ENCODE measurements at regions of chr2 and their contacts with region 1.

Region 1: GRCh38 chr2:98736464-98736889 is 5.5 kb upstream of the MGAT4A start:
- DNase-seq: peak; percentile 59
- ATAC-seq: peak; percentile 87
- H3K4me3 Mint-ChIP-seq: peak overlapping the region; percentile 34
- H3K27ac Mint-ChIP-seq: peak overlapping the region; percentile 55
- H3K4me1 Mint-ChIP-seq: peaks cover 68% of the 10 kb centered on the region
- H3K27me3 Mint-ChIP-seq: no peaks in the 10 kb centered on the region

Region 2: DNA sequence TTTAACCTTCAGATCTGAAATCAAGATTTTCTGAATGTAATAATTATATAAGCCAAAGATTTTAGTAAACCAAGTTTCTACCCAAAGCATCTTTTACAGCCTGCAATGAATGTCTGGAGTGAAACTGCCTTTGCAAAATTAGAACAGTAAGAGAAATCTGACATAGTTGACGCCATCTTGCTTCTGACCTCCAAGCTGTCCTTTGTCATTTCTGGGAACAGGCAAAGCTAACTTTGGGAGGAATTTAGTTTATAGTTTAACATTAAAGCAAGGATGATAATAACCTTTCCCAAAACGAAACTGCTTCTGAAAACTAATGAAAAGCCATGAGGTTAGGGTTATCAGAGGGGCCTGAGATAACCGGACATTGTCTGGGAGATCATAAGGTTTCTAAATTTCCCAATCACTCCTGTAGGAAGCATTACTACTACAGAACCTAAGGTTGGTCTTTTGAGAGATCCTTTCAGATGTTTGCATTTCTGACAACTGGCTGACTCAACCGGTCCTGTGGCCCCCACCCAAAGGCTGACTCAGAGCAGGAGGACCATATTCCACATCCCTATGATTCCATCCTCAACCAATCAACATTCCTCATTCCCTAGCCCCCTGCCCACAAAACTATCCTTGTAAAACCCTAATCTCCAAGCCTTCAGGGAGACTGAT is 865.2 kb before region 1 on chr2:
- CTCF ChIA-PET with region 1: no interaction called
- POLR2A ChIA-PET with region 1: no interaction called
- intact Hi-C with region 1: no loop called
- DNase-seq: no peak
- ATAC-seq: no peak
- H3K4me3 Mint-ChIP-seq: no peak overlapping the region
- H3K27ac Mint-ChIP-seq: peak overlapping the region; percentile 51
- H3K4me1 Mint-ChIP-seq: peaks cover 54% of the 10 kb centered on the region
- H3K27me3 Mint-ChIP-seq: no peaks in the 10 kb centered on the region

Region 3: GRCh38 chr2:98598779-98599428 is 137.6 kb before region 1 on chr2:
- CTCF ChIA-PET with region 1: no interaction called
- POLR2A ChIA-PET with region 1: no interaction called
- intact Hi-C with region 1: no loop called
- DNase-seq: no peak
- ATAC-seq: peak; percentile 30
- H3K4me3 Mint-ChIP-seq: no peak overlapping the region
- H3K27ac Mint-ChIP-seq: peak overlapping the region; percentile 70
- H3K4me1 Mint-ChIP-seq: peaks cover 6% of the 10 kb centered on the region
- H3K27me3 Mint-ChIP-seq: no peaks in the 10 kb centered on the region

Region 4: GRCh38 chr2:98749066-98749450 is 12.6 kb after region 1 on chr2:
- CTCF ChIA-PET with region 1: interaction called, 10 read pairs
- POLR2A ChIA-PET with region 1: no interaction called
- intact Hi-C with region 1: no loop called
- DNase-seq: peak; percentile 32
- ATAC-seq: peak; percentile 60
- H3K4me3 Mint-ChIP-seq: no peak overlapping the region
- H3K27ac Mint-ChIP-seq: peak overlapping the region; percentile 20
- H3K4me1 Mint-ChIP-seq: peaks cover 30% of the 10 kb centered on the region
- H3K27me3 Mint-ChIP-seq: no peaks in the 10 kb centered on the region

Region 5: DNA sequence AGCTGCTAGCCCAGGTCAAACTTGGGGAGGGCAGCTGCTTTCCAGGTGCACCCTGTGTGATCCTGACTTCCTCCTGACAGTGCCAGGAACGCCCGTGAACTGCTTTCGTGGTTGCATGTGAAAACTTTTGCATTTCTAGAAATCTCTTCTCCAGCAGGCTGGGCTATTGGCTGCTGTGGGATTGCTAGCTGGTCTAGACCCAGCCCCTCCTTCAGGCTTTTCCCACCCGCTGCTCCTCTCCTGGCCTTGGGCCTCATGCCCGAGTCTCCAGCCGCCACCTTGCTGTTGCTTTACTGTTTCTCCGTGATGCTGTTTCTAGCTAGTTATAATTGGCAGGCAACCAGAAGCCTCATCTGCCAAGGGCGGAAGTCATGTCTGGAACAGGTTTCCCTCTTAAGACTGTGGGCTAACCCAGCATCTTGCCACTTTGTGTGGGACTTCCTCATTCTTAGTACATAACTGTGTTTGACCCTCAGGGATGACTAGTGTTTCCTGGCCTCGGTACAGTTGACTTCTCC is 21.5 kb after region 1 on chr2:
- CTCF ChIA-PET with region 1: interaction called, 9 read pairs
- POLR2A ChIA-PET with region 1: no interaction called
- intact Hi-C with region 1: loop called in 1 of 2 experiments (anchors 2 kb)
- DNase-seq: peak; percentile 68
- ATAC-seq: peak; percentile 54
- H3K4me3 Mint-ChIP-seq: peak overlapping the region; percentile 57
- H3K27ac Mint-ChIP-seq: peak overlapping the region; percentile 95
- H3K4me1 Mint-ChIP-seq: peaks cover 49% of the 10 kb centered on the region
- H3K27me3 Mint-ChIP-seq: no peaks in the 10 kb centered on the region

Measured in activated CD4-positive, alpha-beta T cell treated with anti-CD3 and anti-CD28 coated beads for 36 hours (primary cell).